Activated CD4-positive, alpha-beta memory T cell treated with anti-CD3 and anti-CD28 coated beads for 36 hours (primary cell): ENCODE measurements at regions of chr13 and their contacts with region 1.

Region 1: GRCh38 chr13:114151565-114152284 is 19.3 kb upstream of the RASA3 start:
- DNase-seq: peak; percentile 83
- H3K4me3 Mint-ChIP-seq: peak overlapping the region; percentile 64
- H3K27ac Mint-ChIP-seq: peak overlapping the region; percentile 87
- H3K4me1 Mint-ChIP-seq: peaks cover 66% of the 10 kb centered on the region
- H3K27me3 Mint-ChIP-seq: no peaks in the 10 kb centered on the region

Region 2: DNA sequence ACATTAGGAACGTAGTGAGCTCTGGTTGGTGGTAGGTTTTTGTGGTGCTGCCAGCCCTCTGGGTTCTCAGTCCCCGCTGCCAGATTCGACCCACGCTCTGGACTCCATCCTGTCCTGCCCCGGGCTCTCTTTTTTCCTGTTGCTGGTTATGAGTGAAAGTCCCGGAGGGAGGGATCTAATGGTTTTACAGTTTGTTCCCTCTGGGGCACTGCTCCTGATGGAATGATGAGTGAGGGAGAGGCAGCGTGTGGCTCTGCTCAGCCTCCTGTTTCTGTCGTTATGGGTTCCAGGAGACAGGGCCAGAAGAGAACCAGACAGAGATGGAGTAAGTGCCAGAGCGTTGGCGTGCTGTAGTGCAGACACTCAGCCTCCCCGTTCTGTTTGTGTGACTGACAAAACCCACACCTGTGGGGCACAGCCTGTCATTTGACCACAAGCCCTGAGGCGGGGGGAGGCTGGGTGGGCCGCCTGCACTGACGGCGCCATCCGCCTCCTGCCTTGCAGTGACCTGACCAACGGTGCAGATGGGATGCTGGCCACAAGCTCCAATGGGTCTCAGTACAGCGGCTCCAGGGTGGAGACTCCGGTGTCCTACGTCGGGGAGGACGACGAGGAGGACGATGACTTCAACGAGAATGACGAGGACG is 512.0 kb before region 1 on chr13:
- CTCF ChIA-PET with region 1: no interaction called
- POLR2A ChIA-PET with region 1: no interaction called
- intact Hi-C with region 1: no loop called
- DNase-seq: peak; percentile 4
- H3K4me3 Mint-ChIP-seq: no peak overlapping the region
- H3K27ac Mint-ChIP-seq: no peak overlapping the region
- H3K4me1 Mint-ChIP-seq: no peaks in the 10 kb centered on the region
- H3K27me3 Mint-ChIP-seq: no peaks in the 10 kb centered on the region

Region 3: DNA sequence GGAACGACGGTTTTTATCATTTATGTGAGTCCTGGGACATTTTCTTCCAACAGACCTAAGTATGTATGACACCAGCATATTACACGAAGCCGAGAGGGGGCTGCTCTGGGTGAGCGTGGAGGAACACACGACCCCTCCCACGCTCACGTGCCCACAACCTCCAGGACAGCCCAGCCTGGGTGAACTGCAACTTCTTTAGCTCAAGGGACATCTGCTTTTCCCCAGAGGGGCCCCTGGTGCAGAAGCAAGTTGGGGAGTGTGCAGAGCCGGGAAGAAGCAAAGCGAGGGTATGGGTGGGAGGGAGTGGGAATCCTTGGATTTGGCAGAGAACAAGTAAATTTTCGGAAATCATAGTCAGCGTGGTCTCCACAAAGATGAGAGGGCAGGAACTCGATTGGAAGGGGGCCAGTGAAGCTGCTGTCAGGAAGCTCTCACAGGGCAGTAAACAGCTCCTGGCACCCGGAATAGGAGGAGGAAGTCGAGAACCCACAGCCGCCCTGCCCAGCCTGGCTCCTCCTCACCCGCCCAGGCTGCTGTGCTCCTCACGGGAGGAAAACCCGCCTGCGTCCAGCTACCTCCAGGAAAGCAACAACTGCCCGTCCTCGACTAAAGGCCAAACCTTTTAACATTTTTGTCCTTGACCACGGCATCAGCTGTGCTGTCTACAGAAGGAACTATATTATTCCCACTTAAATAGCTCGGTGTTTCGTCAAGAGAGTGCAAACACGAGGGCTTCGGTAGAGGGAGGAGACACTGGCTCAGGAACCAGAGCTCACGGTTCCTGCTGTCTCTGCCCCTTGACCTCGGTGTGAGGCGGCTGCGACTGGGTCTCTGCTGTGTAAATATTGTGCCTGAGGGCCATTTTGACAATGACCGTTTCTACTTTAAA is 10.2 kb after region 1 on chr13:
- CTCF ChIA-PET with region 1: interaction called, 8 read pairs
- POLR2A ChIA-PET with region 1: interaction called, 4 read pairs
- intact Hi-C with region 1: loop called (anchors 1 kb)
- DNase-seq: peak; percentile 61
- H3K4me3 Mint-ChIP-seq: peak overlapping the region; percentile 64
- H3K27ac Mint-ChIP-seq: peak overlapping the region; percentile 69
- H3K4me1 Mint-ChIP-seq: peaks cover 71% of the 10 kb centered on the region
- H3K27me3 Mint-ChIP-seq: no peaks in the 10 kb centered on the region

Region 4: DNA sequence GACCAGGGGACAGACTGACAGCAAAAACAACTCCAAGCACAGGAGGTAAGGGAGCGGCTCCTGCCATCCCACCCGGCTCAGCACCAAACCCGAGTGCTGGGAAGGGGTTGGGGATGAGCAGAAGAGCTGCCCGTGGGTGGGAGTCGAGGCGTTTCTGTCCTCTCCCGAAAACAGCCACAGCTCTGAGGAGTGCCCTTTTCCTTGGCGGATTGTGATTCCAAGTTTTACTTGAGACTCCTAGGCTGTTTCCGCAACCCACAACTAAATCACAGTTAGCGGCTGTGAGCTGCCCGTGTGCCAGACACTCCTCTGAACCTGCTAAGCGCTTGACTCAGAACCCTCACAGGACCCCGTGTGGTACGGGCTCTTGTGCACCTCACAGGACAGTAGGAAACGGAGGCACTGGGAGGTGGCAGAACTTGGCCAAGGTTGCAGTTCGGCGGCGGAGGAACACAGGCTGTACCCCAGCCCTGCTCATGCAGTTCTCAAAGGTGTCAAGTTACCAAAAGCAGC is 48.7 kb after region 1 on chr13:
- CTCF ChIA-PET with region 1: no interaction called
- POLR2A ChIA-PET with region 1: no interaction called
- intact Hi-C with region 1: no loop called
- DNase-seq: no peak
- H3K4me3 Mint-ChIP-seq: no peak overlapping the region
- H3K27ac Mint-ChIP-seq: no peak overlapping the region
- H3K4me1 Mint-ChIP-seq: peaks cover 22% of the 10 kb centered on the region
- H3K27me3 Mint-ChIP-seq: no peaks in the 10 kb centered on the region